Naive thymus-derived CD4-positive, alpha-beta T cell (primary cell): ENCODE measurements at regions of chr14 and their contacts with region 1.

Region 1: GRCh38 chr14:51884086-51884927 is 23.9 kb downstream of the GNG2 start:
- DNase-seq: no peak
- ATAC-seq: peak; percentile 79
- H3K4me3 ChIP-seq: no peak overlapping the region
- H3K4me3 Mint-ChIP-seq: peak overlapping the region in 9 of 10 donors; percentile 9 to 66 (median 43)
- H3K27ac ChIP-seq: peak overlapping the region; percentile 19
- H3K27ac Mint-ChIP-seq: peak overlapping the region; percentile 18 to 91 (median 82)
- H3K4me1 ChIP-seq: peaks cover 45 to 49% of the 10 kb centered on the region in 2 donors
- H3K4me1 Mint-ChIP-seq: peaks cover 50 to 95% (median 89%) of the 10 kb centered on the region in 7 donors
- H3K27me3 ChIP-seq: no peaks in the 10 kb centered on the region
- H3K27me3 Mint-ChIP-seq: no peaks in the 10 kb centered on the region

Region 2: GRCh38 chr14:51357250-51357649 is 527.1 kb before region 1 on chr14:
- CTCF ChIA-PET with region 1: no interaction called
- POLR2A ChIA-PET with region 1: no interaction called
- intact Hi-C with region 1: no loop called
- DNase-seq: no peak
- ATAC-seq: no peak
- H3K4me3 ChIP-seq: no peak overlapping the region
- H3K4me3 Mint-ChIP-seq: no peak overlapping the region
- H3K27ac ChIP-seq: no peak overlapping the region
- H3K27ac Mint-ChIP-seq: peak overlapping the region in 1 of 9 donors; percentile 27
- H3K4me1 ChIP-seq: no peaks in the 10 kb centered on the region
- H3K4me1 Mint-ChIP-seq: no peaks in the 10 kb centered on the region
- H3K27me3 ChIP-seq: no peaks in the 10 kb centered on the region
- H3K27me3 Mint-ChIP-seq: peaks cover 4 to 19% (median 5%) of the 10 kb centered on the region in 5 donors

Region 3: DNA sequence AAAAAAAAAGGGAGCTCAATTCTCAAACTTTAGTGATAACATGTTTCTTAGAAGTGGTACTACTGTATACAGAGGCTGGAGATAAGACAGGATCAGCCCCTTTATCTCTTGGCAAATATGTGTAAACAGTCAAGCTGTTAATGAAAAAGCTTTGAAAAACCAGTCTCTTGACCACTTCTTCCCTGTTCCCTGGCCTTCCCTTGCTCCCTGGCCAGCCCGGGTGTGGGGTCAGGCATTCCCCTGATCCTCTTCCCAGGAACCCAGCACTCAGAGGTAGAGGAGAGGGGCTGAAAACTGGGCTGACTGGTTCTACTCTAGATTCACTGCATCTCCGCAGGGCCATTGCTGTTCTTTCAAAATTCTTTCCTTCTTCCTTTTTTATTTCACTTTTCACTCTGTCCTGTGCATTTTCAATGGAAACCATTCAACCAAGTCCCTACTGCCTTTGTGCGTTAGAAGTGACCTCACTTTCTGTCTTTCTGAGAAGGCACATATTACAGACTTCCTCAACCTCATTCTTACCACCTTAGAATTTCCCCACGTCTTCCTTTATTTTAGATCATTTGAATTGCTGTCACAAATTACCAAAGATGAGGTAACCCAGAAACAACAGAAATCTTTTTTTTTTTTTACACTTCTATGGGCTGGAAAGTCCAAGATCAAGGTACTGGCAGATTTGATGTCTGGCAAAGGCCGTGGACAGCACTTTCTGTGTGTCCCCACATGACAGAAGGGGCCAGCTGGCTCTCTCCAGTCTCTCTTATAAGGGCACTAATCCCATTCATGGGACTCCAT is 18.2 kb before region 1 on chr14:
- CTCF ChIA-PET with region 1: interaction called, 4 read pairs
- POLR2A ChIA-PET with region 1: interaction called, 22 read pairs
- intact Hi-C with region 1: loop called (anchors 1 to 2 kb)
- DNase-seq: peak in 3 of 9 donors; percentile 33 to 44 (median 37)
- ATAC-seq: peak; percentile 72
- H3K4me3 ChIP-seq: no peak overlapping the region
- H3K4me3 Mint-ChIP-seq: peak overlapping the region in 2 of 10 donors; percentile 10 to 27
- H3K27ac ChIP-seq: peak overlapping the region; percentile 50
- H3K27ac Mint-ChIP-seq: peak overlapping the region in 1 of 9 donors; percentile 11
- H3K4me1 ChIP-seq: peaks cover 57 to 63% of the 10 kb centered on the region in 2 donors
- H3K4me1 Mint-ChIP-seq: peaks cover 16 to 44% (median 28%) of the 10 kb centered on the region in 7 donors
- H3K27me3 ChIP-seq: no peaks in the 10 kb centered on the region
- H3K27me3 Mint-ChIP-seq: no peaks in the 10 kb centered on the region

Region 4: DNA sequence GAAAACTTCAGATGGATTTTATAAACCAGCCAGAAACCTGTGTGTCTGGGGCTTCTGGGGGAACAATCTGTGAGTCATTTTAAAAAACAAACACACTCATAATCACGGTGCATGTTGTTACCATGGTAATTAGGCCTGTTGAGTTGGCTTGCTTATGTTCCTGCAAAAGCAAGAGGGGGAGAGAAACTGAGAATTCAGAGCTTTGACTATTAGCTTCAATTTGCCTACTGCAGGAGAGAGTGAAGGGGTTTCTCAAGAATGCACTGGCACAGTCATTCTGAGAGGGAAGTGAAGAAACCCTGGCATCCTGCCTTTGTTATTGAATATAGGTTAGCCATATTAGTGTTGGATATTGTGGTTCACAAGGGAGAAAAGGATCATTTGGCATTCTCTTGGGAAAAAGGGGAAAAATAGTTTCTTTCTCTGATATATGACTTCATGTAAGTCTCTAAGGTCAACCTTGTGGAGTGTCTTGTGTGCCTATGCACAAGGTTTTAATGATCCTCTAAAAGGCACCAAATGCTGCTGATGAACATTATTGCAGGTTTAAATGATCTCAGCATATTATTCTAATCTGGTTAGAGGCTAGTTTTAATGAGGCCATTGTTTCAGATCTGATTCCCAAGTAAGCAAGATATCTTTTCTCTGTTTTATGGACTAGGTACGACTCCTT is 10.9 kb before region 1 on chr14:
- CTCF ChIA-PET with region 1: interaction called, 3 read pairs
- POLR2A ChIA-PET with region 1: interaction called, 5 read pairs
- intact Hi-C with region 1: loop called in 1 of 2 experiments (anchors 1 kb)
- DNase-seq: peak in 2 of 9 donors; percentile 38 to 50
- ATAC-seq: peak; percentile 76
- H3K4me3 ChIP-seq: no peak overlapping the region
- H3K4me3 Mint-ChIP-seq: peak overlapping the region in 6 of 10 donors; percentile 1 to 70 (median 28)
- H3K27ac ChIP-seq: no peak overlapping the region
- H3K27ac Mint-ChIP-seq: peak overlapping the region; percentile 24 to 84 (median 69)
- H3K4me1 ChIP-seq: peaks cover 31 to 68% of the 10 kb centered on the region in 2 donors
- H3K4me1 Mint-ChIP-seq: peaks cover 34 to 64% (median 56%) of the 10 kb centered on the region in 7 donors
- H3K27me3 ChIP-seq: no peaks in the 10 kb centered on the region
- H3K27me3 Mint-ChIP-seq: no peaks in the 10 kb centered on the region

Region 5: DNA sequence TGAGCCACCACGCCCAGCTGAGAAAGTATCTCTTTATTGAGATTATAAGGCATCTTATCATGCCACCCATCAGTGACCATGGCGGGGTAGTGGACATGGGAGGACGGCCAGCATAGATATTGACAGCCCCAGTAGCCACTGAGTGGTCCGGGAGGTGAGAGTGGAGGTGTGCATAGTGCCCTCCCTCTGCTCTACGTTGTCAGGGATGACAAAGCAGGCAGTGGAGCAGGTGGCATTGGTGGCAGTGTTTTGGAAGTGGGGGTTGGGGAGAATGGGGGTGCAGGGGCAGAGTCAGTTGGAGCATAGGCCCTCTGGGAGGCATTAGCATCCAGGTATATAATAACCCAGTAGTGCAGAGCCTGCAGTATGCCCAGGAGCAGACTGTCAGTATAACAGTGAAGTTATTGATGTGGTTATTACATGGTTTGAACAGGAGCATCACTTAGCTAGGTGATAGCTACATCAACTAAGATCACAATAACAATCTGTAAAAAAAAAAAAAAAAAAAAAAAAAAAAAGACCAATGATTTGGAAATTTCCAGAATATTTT is 17.2 kb after region 1 on chr14:
- CTCF ChIA-PET with region 1: interaction called, 4 read pairs
- POLR2A ChIA-PET with region 1: interaction called, 3 read pairs
- intact Hi-C with region 1: loop called in 1 of 2 experiments (anchors 2 kb)
- DNase-seq: peak in 7 of 9 donors; percentile 16 to 56 (median 42)
- ATAC-seq: peak; percentile 66
- H3K4me3 ChIP-seq: no peak overlapping the region
- H3K4me3 Mint-ChIP-seq: peak overlapping the region in 5 of 10 donors; percentile 7 to 59 (median 30)
- H3K27ac ChIP-seq: no peak overlapping the region
- H3K27ac Mint-ChIP-seq: peak overlapping the region in 8 of 9 donors; percentile 54 to 94 (median 75)
- H3K4me1 ChIP-seq: peaks cover 36% of the 10 kb centered on the region in 2 donors
- H3K4me1 Mint-ChIP-seq: peaks cover 39 to 84% (median 75%) of the 10 kb centered on the region in 7 donors
- H3K27me3 ChIP-seq: no peaks in the 10 kb centered on the region
- H3K27me3 Mint-ChIP-seq: no peaks in the 10 kb centered on the region